Activated B cell treated with CpG ODN at 0.5 μM for 24 hours (primary cell): ENCODE measurements at regions of chr2 and their contacts with region 1.

Region 1: DNA sequence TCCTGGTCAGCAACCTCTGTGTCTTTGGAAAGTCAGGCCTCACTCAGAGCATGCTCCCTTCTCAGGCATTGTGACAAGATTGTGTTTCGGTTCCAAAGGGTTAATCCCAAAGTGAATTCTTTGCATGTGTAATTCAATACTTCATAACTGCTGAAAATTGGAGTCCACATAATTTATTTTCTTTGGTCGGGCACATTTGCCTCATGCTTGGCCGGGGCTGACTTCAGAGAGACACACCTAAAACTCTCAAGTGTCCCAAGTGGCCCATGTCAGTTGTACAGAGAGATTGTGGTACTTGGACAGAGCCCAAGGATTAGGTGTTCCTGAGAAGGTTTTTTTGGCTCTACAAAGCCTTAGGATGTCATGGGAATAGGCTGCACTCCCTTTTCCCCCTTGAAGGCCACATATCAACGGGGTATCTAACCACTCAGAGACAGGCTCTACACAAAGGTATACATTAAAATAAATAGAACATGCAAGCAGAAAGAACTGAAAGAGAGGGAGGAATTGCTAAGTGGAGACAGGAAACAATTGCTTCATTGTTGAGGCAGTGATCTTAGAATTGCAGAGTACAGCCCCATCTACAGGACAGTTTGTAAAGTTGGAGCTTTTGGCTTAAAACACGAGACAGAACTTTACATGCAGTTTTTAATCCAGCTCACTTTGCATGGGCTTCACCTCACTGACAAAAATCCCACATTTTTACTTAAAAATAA is 1232.3 kb upstream of the ZEB2 start:
- DNase-seq: no peak
- ATAC-seq: peak; percentile 45
- H3K4me3 Mint-ChIP-seq: peak overlapping the region; percentile 37
- H3K27ac Mint-ChIP-seq: peak overlapping the region; percentile 77
- H3K4me1 Mint-ChIP-seq: peaks cover 64% of the 10 kb centered on the region
- H3K27me3 Mint-ChIP-seq: no peaks in the 10 kb centered on the region
- CTCF ChIP-seq: peak; percentile 73

Region 2: DNA sequence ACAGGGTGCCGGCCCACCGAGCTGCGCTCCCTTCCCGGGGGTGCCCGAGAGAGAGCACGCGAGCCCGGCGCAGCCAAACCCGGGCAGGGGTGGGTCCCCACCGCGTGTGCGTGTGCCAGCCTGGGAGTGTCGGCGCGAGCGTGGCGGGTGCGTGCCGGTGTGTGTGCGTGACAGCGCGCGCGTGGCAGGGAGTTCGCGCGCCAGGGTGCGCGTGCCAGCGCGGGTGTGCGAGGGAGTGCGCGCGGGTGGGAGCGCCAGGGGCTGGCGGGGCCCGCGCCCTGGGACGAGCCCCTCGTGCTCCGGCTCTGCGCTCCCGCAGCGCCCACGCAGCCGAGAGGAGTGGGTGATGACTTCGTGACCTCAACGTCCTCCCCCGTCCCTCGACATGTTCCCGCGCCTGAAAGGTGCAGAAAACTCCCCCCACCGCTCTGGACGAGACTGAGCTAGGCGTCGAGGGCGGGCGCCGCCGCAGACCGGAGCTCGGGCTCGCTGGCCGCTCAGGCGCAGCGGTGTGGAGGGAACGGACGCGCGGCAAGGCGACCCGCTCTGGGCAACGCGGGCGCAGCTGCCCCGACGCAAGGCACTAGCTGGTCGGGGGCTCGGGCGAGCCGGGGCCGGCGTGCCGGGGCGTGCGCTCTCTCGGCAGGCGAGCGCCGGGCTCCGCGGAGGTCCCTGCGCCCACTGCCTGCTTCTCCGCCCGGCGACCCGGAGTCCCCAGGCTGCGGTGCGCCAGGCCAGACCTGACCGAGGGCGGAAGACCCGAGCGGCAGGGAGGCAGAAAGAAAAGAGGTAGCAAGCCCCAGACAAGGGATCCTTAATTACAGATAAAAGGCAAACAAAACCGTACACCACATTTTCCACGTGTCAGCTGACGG is 1815.2 kb before region 1 on chr2:
- CTCF ChIA-PET with region 1: no interaction called
- POLR2A ChIA-PET with region 1: no interaction called
- intact Hi-C with region 1: loop called (anchors 5 kb)
- DNase-seq: peak; percentile 24
- ATAC-seq: peak; percentile 67
- H3K4me3 Mint-ChIP-seq: peak overlapping the region; percentile 70
- H3K27ac Mint-ChIP-seq: no peak overlapping the region
- H3K4me1 Mint-ChIP-seq: peaks cover 20% of the 10 kb centered on the region
- H3K27me3 Mint-ChIP-seq: peaks cover 19% of the 10 kb centered on the region
- CTCF ChIP-seq: no peak

Region 3: DNA sequence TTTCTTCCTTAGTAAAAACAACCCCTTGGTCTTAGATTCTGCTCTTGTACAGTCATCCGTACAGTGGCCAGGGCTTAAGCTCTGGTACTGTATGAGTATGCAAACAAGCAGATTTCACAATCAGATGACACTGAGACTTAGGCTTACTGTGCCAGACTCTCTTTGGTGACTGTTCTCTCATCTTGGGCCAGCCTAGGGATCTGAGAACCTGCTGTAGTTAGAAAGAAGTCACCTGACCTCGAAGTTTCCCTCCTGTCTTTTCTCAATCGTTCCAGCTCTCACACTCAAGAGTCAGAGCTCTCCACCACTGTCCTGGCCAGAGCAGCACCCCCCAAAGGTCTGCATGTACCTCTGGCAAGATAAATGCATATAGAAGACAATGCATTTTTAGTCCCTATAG is 1295.6 kb before region 1 on chr2:
- CTCF ChIA-PET with region 1: no interaction called
- POLR2A ChIA-PET with region 1: no interaction called
- intact Hi-C with region 1: loop called (anchors 5 kb)
- DNase-seq: no peak
- ATAC-seq: peak; percentile 90
- H3K4me3 Mint-ChIP-seq: peak overlapping the region; percentile 25
- H3K27ac Mint-ChIP-seq: peak overlapping the region; percentile 83
- H3K4me1 Mint-ChIP-seq: peaks cover 96% of the 10 kb centered on the region
- H3K27me3 Mint-ChIP-seq: no peaks in the 10 kb centered on the region
- CTCF ChIP-seq: no peak

Region 4: DNA sequence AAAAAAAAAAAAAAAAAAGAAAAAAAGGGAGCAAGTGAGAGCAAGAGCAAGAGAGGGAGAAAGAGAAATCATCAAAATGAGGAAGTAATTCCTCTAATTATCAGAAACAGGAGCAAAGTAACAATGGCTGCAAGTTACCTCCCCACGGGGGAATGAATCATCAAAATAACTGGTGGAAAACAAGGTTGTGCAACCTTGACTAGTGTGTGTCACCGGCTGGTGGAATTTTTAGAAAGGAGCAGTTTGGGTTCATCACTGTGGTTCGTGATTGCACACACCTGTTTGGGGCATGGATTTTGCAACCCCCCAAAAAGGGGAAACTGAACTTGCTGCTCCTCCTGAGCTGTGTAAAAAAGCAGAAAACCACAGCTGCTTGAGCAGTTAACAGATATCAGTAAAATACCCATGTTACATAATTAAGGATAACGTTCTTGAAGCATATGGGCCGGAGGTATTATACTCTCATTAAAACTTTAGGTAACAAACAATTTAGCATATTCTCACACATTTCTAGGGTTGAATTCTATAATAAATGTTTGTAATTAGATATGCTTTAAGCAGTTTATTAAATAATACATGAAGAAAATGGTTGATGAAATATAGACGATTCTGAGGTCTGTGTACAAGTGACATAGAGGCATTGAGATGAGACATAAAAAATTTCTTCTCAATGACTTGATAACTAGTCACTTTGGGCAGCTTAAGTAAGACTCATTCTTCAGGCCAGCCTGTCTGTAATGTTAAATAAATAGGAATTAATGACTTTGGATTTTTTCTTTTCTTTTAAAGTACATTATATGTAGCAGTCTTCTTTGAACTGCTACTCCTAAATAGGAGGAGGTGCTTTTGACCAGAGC is 1048.2 kb before region 1 on chr2:
- CTCF ChIA-PET with region 1: no interaction called
- POLR2A ChIA-PET with region 1: no interaction called
- intact Hi-C with region 1: loop called (anchors 1 kb)
- DNase-seq: peak; percentile 27
- ATAC-seq: peak; percentile 81
- H3K4me3 Mint-ChIP-seq: peak overlapping the region; percentile 36
- H3K27ac Mint-ChIP-seq: peak overlapping the region; percentile 73
- H3K4me1 Mint-ChIP-seq: peaks cover 51% of the 10 kb centered on the region
- H3K27me3 Mint-ChIP-seq: no peaks in the 10 kb centered on the region
- CTCF ChIP-seq: no peak

Region 5: GRCh38 chr2:145186303-145186702 is 565.9 kb before region 1 on chr2:
- CTCF ChIA-PET with region 1: no interaction called
- POLR2A ChIA-PET with region 1: no interaction called
- intact Hi-C with region 1: loop called (anchors 10 kb)
- DNase-seq: no peak
- ATAC-seq: peak; percentile 47
- H3K4me3 Mint-ChIP-seq: peak overlapping the region; percentile 17
- H3K27ac Mint-ChIP-seq: peak overlapping the region; percentile 24
- H3K4me1 Mint-ChIP-seq: peaks cover 31% of the 10 kb centered on the region
- H3K27me3 Mint-ChIP-seq: no peaks in the 10 kb centered on the region
- CTCF ChIP-seq: no peak

Region 6: GRCh38 chr2:145593832-145594614 is 158.2 kb before region 1 on chr2:
- CTCF ChIA-PET with region 1: no interaction called
- POLR2A ChIA-PET with region 1: no interaction called
- intact Hi-C with region 1: loop called (anchors 1 kb)
- DNase-seq: no peak
- ATAC-seq: no peak
- H3K4me3 Mint-ChIP-seq: peak overlapping the region; percentile 6
- H3K27ac Mint-ChIP-seq: peak overlapping the region; percentile 83
- H3K4me1 Mint-ChIP-seq: peaks cover 74% of the 10 kb centered on the region
- H3K27me3 Mint-ChIP-seq: no peaks in the 10 kb centered on the region
- CTCF ChIP-seq: no peak